CD8-positive, alpha-beta T cell (primary cell): ENCODE measurements at regions of chr17 and their contacts with region 1.

Region 1: GRCh38 chr17:42527273-42527703 is 8.8 kb upstream of the NAGLU start:
- DNase-seq: peak; percentile 34 to 85 (median 70)
- ATAC-seq: peak; percentile 70
- H3K4me3 ChIP-seq: no peak overlapping the region
- H3K4me3 Mint-ChIP-seq: peak overlapping the region; percentile 9
- H3K27ac ChIP-seq: no peak overlapping the region
- H3K27ac Mint-ChIP-seq: no peak overlapping the region
- H3K4me1 ChIP-seq: peaks cover 41% of the 10 kb centered on the region
- H3K4me1 Mint-ChIP-seq: peaks cover 37% of the 10 kb centered on the region
- H3K27me3 ChIP-seq: no peaks in the 10 kb centered on the region
- H3K27me3 Mint-ChIP-seq: no peaks in the 10 kb centered on the region
- CTCF ChIP-seq: peak; percentile 72

Region 2: DNA sequence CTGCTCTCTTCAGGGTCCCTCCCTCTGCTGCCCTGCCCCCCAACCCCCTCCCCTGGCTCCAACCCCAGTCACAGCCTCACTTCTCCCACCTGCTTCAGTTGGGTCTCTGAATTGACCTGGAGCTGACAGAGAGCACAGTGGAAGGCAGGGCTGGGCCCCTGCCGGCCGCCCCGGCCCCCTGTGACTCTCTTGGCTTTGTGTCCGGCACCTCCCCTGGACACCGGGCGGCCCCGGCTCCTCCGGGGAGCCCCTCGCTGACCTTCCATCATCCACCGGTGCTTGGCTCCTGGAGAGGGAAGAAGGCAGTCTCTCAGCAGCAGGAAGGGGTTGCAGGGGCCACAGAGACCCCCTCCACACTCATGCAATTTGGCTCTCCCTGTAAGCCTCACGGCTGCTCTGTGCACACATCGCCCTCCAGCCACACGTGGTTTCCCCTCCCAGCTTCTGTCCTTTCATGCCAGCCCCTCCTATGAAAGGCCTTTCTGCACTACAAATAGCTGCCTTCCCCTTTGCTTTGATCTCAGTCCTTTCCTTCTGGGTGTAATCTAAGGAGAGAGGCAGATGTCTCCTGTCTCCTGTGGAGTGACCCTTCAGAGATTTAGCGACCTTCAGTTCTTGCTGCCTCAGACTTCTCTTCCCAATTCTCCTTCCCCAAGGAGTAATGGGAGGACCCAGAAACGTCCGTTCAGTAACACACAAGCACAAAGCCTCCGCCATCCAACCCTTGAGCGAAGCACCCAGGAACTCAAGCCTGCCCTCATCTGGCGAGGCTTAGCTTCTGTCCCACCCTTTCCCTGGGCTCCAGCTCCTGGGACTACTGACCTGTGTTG is 499.1 kb before region 1 on chr17:
- CTCF ChIA-PET with region 1: no interaction called
- POLR2A ChIA-PET with region 1: no interaction called
- intact Hi-C with region 1: loop called in 1 of 2 experiments (anchors 5 kb)
- DNase-seq: no peak
- ATAC-seq: no peak
- H3K4me3 ChIP-seq: no peak overlapping the region
- H3K4me3 Mint-ChIP-seq: no peak overlapping the region
- H3K27ac ChIP-seq: no peak overlapping the region
- H3K27ac Mint-ChIP-seq: no peak overlapping the region
- H3K4me1 ChIP-seq: peaks cover 6% of the 10 kb centered on the region
- H3K4me1 Mint-ChIP-seq: peaks cover 5% of the 10 kb centered on the region
- H3K27me3 ChIP-seq: peaks cover 0 to 5% of the 10 kb centered on the region in 2 experiments
- H3K27me3 Mint-ChIP-seq: peaks cover 10% of the 10 kb centered on the region
- CTCF ChIP-seq: no peak

Region 3: DNA sequence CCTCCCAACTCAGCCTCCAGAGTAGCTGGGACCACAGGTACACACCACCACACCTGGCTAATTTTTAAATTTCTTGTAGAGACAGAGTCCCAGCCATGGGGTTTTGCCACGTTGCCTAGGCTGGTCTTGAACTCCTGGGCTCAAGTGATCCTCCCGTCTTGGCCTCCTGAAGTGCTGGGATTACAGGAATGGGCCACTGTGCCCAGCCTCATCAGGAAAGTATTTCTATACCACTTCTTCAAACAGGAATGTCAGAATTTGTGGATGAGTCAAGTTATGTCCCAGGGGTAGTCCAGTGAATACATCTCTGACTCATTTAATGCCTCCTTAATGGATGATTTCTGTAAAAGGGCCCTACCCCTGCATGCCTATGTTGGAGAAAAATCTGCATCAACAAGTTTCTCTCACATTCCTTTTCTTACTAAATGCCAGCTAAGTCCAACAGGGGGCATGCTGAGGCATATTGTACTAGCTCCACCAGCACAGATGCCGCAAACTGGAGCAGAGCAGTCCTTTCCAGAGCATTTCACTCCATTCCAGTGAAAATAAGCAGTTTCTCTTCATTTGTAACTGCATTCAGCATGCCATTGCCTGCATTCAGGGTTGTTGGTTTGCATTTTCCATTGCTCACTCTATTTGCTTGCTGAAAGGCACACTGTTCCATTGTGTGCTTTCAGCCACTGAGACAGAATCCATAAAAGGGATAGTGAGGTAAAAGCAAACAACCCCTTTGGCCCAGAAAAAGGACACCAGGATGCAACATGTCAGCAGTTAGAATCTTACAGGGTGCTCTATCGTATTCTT is 98.9 kb before region 1 on chr17:
- CTCF ChIA-PET with region 1: interaction called, 9 read pairs
- POLR2A ChIA-PET with region 1: no interaction called
- intact Hi-C with region 1: loop called (anchors 1 kb)
- DNase-seq: peak in 7 of 9 experiments; percentile 16 to 74 (median 58)
- ATAC-seq: peak; percentile 71
- H3K4me3 ChIP-seq: no peak overlapping the region
- H3K4me3 Mint-ChIP-seq: no peak overlapping the region
- H3K27ac ChIP-seq: no peak overlapping the region
- H3K27ac Mint-ChIP-seq: no peak overlapping the region
- H3K4me1 ChIP-seq: peaks cover 1% of the 10 kb centered on the region
- H3K4me1 Mint-ChIP-seq: peaks cover 4% of the 10 kb centered on the region
- H3K27me3 ChIP-seq: peaks cover 3 to 4% of the 10 kb centered on the region in 2 experiments
- H3K27me3 Mint-ChIP-seq: peaks cover 14% of the 10 kb centered on the region
- CTCF ChIP-seq: peak; percentile 78

Region 4: GRCh38 chr17:42554250-42555121 is 27.2 kb after region 1 on chr17:
- CTCF ChIA-PET with region 1: interaction called, 5 read pairs
- POLR2A ChIA-PET with region 1: interaction called, 5 read pairs
- intact Hi-C with region 1: loop called in 1 of 2 experiments (anchors 1 kb)
- DNase-seq: peak; percentile 38 to 91 (median 78)
- ATAC-seq: peak; percentile 88
- H3K4me3 ChIP-seq: peak overlapping the region; percentile 70 to 87
- H3K4me3 Mint-ChIP-seq: peak overlapping the region; percentile 89
- H3K27ac ChIP-seq: peak overlapping the region; percentile 74 to 80
- H3K27ac Mint-ChIP-seq: peak overlapping the region; percentile 94
- H3K4me1 ChIP-seq: peaks cover 12% of the 10 kb centered on the region
- H3K4me1 Mint-ChIP-seq: peaks cover 29% of the 10 kb centered on the region
- H3K27me3 ChIP-seq: no peaks in the 10 kb centered on the region
- H3K27me3 Mint-ChIP-seq: no peaks in the 10 kb centered on the region
- CTCF ChIP-seq: no peak